BJ (cell line): ENCODE measurements at regions of chr6 and their contacts with region 1.

Region 1: GRCh38 chr6:110331816-110332215 is 26.3 kb downstream of the METTL24 start:
- DNase-seq: no peak
- H3K4me3 ChIP-seq: no peak overlapping the region
- H3K27me3 ChIP-seq: no peaks in the 10 kb centered on the region
- CTCF ChIP-seq: no peak

Region 2: DNA sequence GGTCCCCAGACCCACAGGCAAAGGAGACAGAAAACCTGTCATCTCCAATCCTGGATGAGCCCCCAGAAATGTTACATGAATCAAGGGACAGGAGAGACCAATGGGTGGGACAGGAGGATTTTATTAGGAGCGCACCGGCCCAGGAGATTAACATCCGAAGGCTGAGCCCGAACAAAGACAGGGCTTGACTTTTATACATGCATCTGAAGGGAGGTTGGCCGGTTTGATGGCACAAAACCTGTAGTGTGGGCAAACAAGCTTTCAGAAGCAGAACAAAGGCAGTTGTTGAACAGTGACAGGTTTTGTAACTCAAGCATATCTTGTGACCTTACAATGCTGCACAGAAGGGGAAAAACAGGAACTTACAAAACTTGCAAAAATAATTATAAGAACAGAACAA is 437.6 kb before region 1 on chr6:
- CTCF ChIA-PET with region 1: no interaction called
- POLR2A ChIA-PET with region 1: no interaction called
- DNase-seq: no peak
- H3K4me3 ChIP-seq: no peak overlapping the region
- H3K27me3 ChIP-seq: peaks cover 3% of the 10 kb centered on the region; the same call in 1 of the 2 replicates
- CTCF ChIP-seq: no peak

Region 3: DNA sequence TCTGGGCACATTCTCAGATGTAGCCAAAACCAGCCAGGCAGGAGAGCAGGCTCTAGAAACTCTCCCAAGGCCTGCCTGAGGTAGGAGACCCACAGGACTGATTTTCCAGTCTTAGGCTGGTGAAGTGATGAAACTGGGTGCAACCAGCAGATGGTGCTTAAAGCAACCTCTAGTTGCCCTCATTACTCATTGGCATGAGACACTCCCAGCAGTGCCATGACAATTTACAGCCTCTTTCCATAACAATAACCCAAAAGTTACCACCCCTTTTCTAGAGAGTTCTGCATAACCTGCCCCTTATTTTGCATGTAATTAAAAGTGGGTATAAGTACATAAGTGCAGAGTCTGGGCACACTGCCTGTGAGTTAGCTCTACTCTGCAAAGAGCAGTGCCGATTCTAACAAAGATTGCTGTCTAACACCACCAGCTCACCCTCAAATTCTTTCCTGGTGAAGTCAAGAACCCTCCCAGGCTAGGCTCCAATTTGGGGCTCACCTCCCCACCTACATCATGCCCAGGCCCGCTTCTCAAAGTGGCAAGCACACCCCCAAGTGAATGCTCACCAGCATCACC is 368.1 kb before region 1 on chr6:
- CTCF ChIA-PET with region 1: no interaction called
- POLR2A ChIA-PET with region 1: no interaction called
- DNase-seq: no peak
- H3K4me3 ChIP-seq: no peak overlapping the region
- H3K27me3 ChIP-seq: 0 out of 2 replicates have a peak, but pooled peaks cover 2% of the 10 kb centered on the region
- CTCF ChIP-seq: no peak

Region 4: DNA sequence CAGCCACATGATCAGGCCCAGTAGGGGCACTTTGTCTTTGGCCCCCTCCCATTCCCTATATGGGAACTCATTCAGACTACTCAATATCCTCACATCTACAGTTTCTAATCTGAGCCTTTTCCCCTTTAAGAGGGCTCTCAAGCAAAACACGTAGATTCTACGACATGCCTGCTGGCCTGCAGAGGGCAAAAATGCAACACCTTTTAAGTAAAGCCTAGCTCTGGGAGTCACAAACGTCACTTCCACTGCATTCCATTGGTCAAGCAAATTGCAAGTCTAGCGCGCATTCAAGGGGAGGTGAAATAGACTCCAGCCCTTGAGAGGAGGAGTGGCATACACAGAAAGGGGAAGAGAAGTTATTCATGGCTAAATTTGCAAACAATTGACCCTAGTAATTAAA is 81.0 kb before region 1 on chr6:
- CTCF ChIA-PET with region 1: no interaction called
- POLR2A ChIA-PET with region 1: no interaction called
- DNase-seq: no peak
- H3K4me3 ChIP-seq: no peak overlapping the region
- H3K27me3 ChIP-seq: no peaks in the 10 kb centered on the region
- CTCF ChIP-seq: no peak

Region 5: GRCh38 chr6:110341663-110342596 is 10.1 kb after region 1 on chr6:
- CTCF ChIA-PET with region 1: interaction called, 11 read pairs
- POLR2A ChIA-PET with region 1: no interaction called
- DNase-seq: no peak
- H3K4me3 ChIP-seq: no peak overlapping the region
- H3K27me3 ChIP-seq: no peaks in the 10 kb centered on the region
- CTCF ChIP-seq: peak; percentile 56